ENCODE measurements at regions of chr6 and their contacts with region 1.

Region 1: GRCh38 chr6:32940656-32941213 is at the start of gene HLA-DMB:
- DNase-seq: peak; percentile 80
- ATAC-seq: peak; percentile 94
- H3K4me3 Mint-ChIP-seq: peak within 1 kb of the TSS; percentile 87
- H3K27ac Mint-ChIP-seq: peak within 1 kb of the TSS; percentile 98
- H3K4me1 Mint-ChIP-seq: peaks cover 67% of the 10 kb centered on the region
- H3K27me3 Mint-ChIP-seq: no peaks in the 10 kb centered on the region
- total RNA-seq, gene HLA-DMB: 22.7 to 31.2 TPM

Region 2: DNA sequence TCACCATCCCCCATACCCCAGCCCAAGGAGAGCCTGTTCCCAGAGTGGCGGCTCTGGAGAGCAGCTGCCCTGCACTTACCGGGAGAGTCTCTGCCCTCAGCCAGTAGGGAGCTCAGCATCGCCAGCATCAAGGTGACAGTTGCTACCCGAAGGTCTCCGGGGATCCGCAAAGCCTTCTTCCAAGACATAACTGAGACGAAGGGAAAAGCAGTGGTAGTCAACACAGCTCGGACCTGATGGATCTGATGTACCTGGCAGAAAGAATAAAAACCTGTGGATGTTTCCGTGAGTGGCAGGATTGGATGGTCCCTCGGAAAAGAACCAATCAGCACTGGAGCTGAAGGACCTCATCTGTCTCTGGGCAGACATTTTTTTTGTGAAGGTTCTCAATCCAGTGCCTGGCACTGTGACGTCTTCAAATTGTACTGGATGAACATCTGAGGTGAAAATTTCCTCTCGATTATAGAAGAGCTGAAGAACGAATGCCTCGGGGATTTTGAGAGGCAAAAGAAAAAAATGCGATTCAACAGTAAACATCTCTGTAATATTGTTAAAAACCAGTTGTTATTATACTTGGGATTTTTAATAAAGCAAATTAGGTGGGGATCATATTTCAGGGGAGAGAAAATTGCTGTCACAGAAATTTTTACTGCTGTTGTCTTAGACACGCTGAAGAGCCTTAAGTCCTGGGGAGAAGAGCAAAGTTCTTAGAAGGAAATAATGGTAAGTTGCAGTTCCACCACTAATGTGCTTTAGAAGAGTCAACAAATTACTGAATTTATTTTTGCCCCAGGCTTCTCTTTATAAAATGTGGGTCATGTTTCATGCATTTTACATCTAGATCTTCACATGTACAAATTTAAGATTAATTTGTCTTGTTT is 274.1 kb before region 1 on chr6 and contains the start of gene HLA-DQB1:
- CTCF ChIA-PET with region 1: no interaction called
- DNase-seq: peak; percentile 84
- ATAC-seq: peak; percentile 77
- H3K4me3 Mint-ChIP-seq: peak within 1 kb of the TSS; percentile 90
- H3K27ac Mint-ChIP-seq: peak within 1 kb of the TSS; percentile 89
- H3K4me1 Mint-ChIP-seq: peaks cover 57% of the 10 kb centered on the region
- H3K27me3 Mint-ChIP-seq: peaks cover 14% of the 10 kb centered on the region
- total RNA-seq, gene HLA-DQB1: 72.9 to 89.8 TPM

Region 3: GRCh38 chr6:32885698-32886286 is 54.9 kb before region 1 on chr6:
- CTCF ChIA-PET with region 1: interaction called, 10 read pairs
- DNase-seq: no peak
- ATAC-seq: peak; percentile 73
- H3K4me3 Mint-ChIP-seq: no peak overlapping the region
- H3K27ac Mint-ChIP-seq: no peak overlapping the region
- H3K4me1 Mint-ChIP-seq: peaks cover 3% of the 10 kb centered on the region
- H3K27me3 Mint-ChIP-seq: peaks cover 11% of the 10 kb centered on the region

Region 4: DNA sequence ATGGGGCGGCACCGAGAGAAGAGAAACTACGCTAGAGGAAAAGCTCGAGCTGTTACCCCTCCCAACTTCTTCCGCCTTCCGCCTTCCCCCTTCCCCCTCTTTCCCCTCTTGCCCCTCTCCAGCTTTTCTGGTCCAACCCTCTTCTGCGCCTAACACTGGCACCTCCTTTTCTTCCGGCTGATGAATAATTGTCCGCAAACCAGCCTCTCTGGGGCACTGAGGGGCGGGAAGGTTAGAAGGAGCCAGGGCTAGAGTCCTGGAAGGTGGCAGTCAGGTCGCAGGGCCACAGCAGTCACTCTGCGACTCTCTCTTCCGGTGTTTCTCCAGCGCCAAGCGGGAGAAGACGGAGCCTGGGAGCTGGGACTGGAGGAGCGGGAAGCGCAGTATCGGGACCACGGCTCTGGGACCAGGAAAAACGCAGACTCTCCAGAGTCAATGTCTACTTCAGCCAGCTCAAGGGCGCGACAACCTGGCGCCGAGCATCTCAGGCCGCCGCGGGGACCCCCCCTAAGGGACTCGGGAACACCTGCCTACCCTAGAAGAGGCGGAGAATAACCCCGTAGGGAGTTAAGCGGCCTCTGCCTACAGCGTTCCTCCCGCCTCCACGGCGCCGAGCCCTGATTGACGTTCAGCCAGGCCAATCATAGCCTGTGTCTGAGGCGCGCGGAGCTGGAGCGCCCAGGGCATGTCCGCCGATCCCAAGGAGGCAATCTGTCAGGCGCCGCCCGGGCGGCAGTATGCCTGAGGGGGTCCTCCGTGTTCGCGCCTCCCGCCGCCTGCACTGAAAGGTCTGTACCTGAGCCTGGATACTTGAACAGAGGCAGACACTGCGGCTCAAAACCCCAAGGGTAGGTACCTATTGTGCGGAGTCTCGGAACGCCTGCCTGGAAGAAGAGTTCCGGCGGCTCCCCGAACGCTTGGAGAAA is 46.4 kb before region 1 on chr6:
- CTCF ChIA-PET with region 1: interaction called, 13 read pairs
- DNase-seq: peak; percentile 96
- ATAC-seq: peak; percentile 99
- H3K4me3 Mint-ChIP-seq: peak overlapping the region; percentile 99
- H3K27ac Mint-ChIP-seq: peak overlapping the region; percentile 94
- H3K4me1 Mint-ChIP-seq: peaks cover 37% of the 10 kb centered on the region
- H3K27me3 Mint-ChIP-seq: peaks cover 4% of the 10 kb centered on the region